Endothelial cell of umbilical vein (primary cell): ENCODE measurements at regions of chr5 and their contacts with region 1.

Region 1: GRCh38 chr5:143824851-143825720 is 13.1 kb downstream of the HMHB1 start:
- DNase-seq: peak; percentile 83
- H3K4me3 ChIP-seq: no peak overlapping the region
- H3K27ac ChIP-seq: no peak overlapping the region
- H3K4me1 ChIP-seq: no peaks in the 10 kb centered on the region
- H3K27me3 ChIP-seq: peaks cover 0 to 2% of the 10 kb centered on the region in 2 experiments
- CTCF ChIP-seq: peak; percentile 84
- POLR2A ChIP-seq: no peak

Region 2: DNA sequence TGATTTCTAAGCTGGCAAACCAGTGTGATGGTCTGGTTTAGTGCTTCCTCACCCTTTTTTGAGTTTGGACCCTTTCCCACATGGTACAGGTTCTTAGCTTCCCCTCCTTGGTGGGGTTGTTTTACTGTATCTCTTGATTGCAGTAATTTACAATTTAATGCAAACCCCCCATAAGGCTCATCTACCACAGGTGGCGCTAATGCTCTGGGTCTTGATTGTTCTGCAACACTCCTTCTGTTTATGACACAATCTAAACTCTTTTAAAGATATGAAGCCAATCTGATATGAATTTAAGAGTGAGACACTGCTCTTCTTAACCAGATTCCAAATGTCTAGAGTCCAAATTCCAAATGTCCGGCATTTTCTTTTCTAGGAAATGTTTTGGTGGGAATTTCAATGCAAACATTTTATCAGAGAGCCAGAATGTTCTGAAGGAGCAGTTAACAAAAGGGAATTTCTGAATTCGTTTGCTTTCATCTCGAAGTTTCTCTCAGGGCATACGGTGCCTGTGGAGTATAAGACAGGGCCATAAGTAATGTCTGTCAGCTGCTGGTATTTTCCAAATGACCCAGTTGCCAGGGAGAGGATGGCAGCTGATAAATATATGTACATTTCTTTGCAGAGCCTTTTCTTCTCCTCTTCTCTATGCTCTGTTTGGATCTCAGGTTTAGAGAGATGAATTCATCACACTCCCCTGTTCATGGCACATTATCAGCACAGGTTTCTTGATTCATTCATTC is 808.1 kb before region 1 on chr5:
- CTCF ChIA-PET with region 1: interaction called, 4 read pairs
- POLR2A ChIA-PET with region 1: no interaction called
- dilution Hi-C with region 1: no loop called
- intact Hi-C with region 1: loop called (anchors 1 kb)
- DNase-seq: peak; percentile 67
- H3K4me3 ChIP-seq: no peak overlapping the region
- H3K27ac ChIP-seq: no peak overlapping the region
- H3K4me1 ChIP-seq: no peaks in the 10 kb centered on the region
- H3K27me3 ChIP-seq: no peaks in the 10 kb centered on the region
- CTCF ChIP-seq: peak; percentile 62 to 63
- POLR2A ChIP-seq: no peak

Region 3: GRCh38 chr5:143106174-143106573 is 718.9 kb before region 1 on chr5:
- CTCF ChIA-PET with region 1: interaction called, 7 read pairs
- POLR2A ChIA-PET with region 1: no interaction called
- dilution Hi-C with region 1: no loop called
- intact Hi-C with region 1: loop called (anchors 1 kb)
- DNase-seq: peak; percentile 79
- H3K4me3 ChIP-seq: no peak overlapping the region
- H3K27ac ChIP-seq: no peak overlapping the region
- H3K4me1 ChIP-seq: no peaks in the 10 kb centered on the region
- H3K27me3 ChIP-seq: no peaks in the 10 kb centered on the region
- CTCF ChIP-seq: peak in 1 of 2 donors; percentile 35
- POLR2A ChIP-seq: no peak

Region 4: GRCh38 chr5:143195491-143195890 is 629.6 kb before region 1 on chr5:
- CTCF ChIA-PET with region 1: no interaction called
- POLR2A ChIA-PET with region 1: no interaction called
- dilution Hi-C with region 1: no loop called
- intact Hi-C with region 1: loop called (anchors 5 kb)
- DNase-seq: no peak
- H3K4me3 ChIP-seq: no peak overlapping the region
- H3K27ac ChIP-seq: no peak overlapping the region
- H3K4me1 ChIP-seq: no peaks in the 10 kb centered on the region
- H3K27me3 ChIP-seq: no peaks in the 10 kb centered on the region
- CTCF ChIP-seq: no peak
- POLR2A ChIP-seq: no peak

Region 5: GRCh38 chr5:143311428-143311827 is 513.7 kb before region 1 on chr5:
- CTCF ChIA-PET with region 1: no interaction called
- POLR2A ChIA-PET with region 1: no interaction called
- dilution Hi-C with region 1: no loop called
- intact Hi-C with region 1: no loop called
- DNase-seq: peak; percentile 83
- H3K4me3 ChIP-seq: no peak overlapping the region
- H3K27ac ChIP-seq: peak overlapping the region; percentile 84
- H3K4me1 ChIP-seq: peaks cover 52% of the 10 kb centered on the region
- H3K27me3 ChIP-seq: no peaks in the 10 kb centered on the region
- CTCF ChIP-seq: no peak
- POLR2A ChIP-seq: no peak

Region 6: GRCh38 chr5:143837306-143837848 is 12.3 kb after region 1 on chr5:
- CTCF ChIA-PET with region 1: interaction called, 10 read pairs
- POLR2A ChIA-PET with region 1: no interaction called
- dilution Hi-C with region 1: no loop called
- intact Hi-C with region 1: no loop called
- DNase-seq: no peak
- H3K4me3 ChIP-seq: no peak overlapping the region
- H3K27ac ChIP-seq: no peak overlapping the region
- H3K4me1 ChIP-seq: no peaks in the 10 kb centered on the region
- H3K27me3 ChIP-seq: no peaks in the 10 kb centered on the region
- CTCF ChIP-seq: no peak
- POLR2A ChIP-seq: no peak

Region 7: GRCh38 chr5:143968011-143968878 is 143.2 kb after region 1 on chr5:
- CTCF ChIA-PET with region 1: interaction called, 5 read pairs
- POLR2A ChIA-PET with region 1: no interaction called
- dilution Hi-C with region 1: no loop called
- intact Hi-C with region 1: loop called (anchors 2 kb)
- DNase-seq: peak; percentile 54
- H3K4me3 ChIP-seq: no peak overlapping the region
- H3K27ac ChIP-seq: no peak overlapping the region
- H3K4me1 ChIP-seq: peaks cover 9% of the 10 kb centered on the region
- H3K27me3 ChIP-seq: no peaks in the 10 kb centered on the region
- CTCF ChIP-seq: peak in 1 of 2 donors; percentile 18
- POLR2A ChIP-seq: no peak

Region 8: DNA sequence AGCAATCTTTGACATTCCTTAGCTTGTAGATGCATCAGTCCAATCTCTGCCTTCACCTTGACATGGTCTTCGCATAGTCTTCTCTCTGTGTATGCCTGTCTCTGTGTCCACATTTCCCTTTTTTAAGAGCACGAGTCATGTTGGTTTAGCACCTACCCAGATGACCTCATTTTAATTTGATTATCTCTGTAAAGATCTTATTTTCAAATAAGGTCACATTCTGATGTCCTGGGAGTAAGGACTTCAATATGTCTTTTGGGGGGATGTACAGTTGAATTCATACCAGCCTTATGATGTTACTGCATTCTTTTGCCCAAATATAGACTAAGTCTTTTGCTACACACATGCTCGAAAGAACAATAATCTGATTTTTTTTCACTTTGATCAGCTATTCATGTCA is 352.5 kb after region 1 on chr5:
- CTCF ChIA-PET with region 1: no interaction called
- POLR2A ChIA-PET with region 1: no interaction called
- dilution Hi-C with region 1: no loop called
- intact Hi-C with region 1: no loop called
- DNase-seq: no peak
- H3K4me3 ChIP-seq: no peak overlapping the region
- H3K27ac ChIP-seq: no peak overlapping the region
- H3K4me1 ChIP-seq: no peaks in the 10 kb centered on the region
- H3K27me3 ChIP-seq: no peaks in the 10 kb centered on the region
- CTCF ChIP-seq: no peak
- POLR2A ChIP-seq: no peak